ENCODE measurements at regions of chr2 and their contacts with region 1.

Region 1: DNA sequence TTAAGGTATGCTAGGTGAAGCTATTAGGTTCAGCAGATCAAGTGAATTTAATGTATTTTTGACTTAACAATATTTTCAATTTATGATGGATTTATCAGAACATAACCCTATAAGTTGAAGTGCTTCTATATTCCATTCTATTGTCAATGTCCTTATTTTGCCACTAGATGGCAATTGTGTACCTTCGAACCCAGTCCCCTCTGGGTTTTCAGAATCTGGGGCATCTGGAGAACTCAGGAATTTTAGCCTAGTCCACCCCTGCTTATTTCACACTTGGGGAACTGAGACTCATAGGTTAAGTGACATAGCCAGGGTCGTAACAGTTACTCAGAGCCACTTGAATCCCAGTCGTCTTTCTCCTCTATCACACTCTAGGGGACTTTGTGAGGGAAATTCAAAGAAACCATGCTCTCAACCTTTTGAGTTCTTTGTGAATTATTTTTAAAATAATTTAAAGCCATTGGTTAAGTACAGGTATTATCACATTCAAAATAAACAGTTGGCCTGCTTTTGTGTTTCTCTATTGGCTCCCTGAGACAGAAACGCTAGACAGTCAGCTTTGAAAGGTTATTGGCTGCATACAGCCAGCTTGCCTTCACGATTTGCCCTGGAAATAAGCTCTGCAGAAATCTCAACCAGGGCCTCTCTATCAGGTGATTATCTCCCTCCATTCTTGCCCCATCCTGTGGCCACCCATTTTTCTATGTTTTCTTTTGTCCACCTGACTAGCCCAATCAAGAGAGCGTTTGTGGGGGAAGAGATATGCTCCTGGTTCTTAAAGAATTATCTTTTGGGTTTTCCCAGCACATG is 145.0 kb downstream of the TTC27 start:
- DNase-seq: peak; percentile 42
- CTCF ChIP-seq: peak; percentile 13

Region 2: GRCh38 chr2:32951672-32952071 is 178.8 kb after region 1 on chr2:
- in situ Hi-C with region 1: no loop called
- DNase-seq: no peak
- CTCF ChIP-seq: no peak

Region 3: GRCh38 chr2:33372940-33373553 is 600.2 kb after region 1 on chr2:
- in situ Hi-C with region 1: loop called (anchors 10 kb)
- DNase-seq: peak; percentile 69
- CTCF ChIP-seq: peak; percentile 56

Region 4: DNA sequence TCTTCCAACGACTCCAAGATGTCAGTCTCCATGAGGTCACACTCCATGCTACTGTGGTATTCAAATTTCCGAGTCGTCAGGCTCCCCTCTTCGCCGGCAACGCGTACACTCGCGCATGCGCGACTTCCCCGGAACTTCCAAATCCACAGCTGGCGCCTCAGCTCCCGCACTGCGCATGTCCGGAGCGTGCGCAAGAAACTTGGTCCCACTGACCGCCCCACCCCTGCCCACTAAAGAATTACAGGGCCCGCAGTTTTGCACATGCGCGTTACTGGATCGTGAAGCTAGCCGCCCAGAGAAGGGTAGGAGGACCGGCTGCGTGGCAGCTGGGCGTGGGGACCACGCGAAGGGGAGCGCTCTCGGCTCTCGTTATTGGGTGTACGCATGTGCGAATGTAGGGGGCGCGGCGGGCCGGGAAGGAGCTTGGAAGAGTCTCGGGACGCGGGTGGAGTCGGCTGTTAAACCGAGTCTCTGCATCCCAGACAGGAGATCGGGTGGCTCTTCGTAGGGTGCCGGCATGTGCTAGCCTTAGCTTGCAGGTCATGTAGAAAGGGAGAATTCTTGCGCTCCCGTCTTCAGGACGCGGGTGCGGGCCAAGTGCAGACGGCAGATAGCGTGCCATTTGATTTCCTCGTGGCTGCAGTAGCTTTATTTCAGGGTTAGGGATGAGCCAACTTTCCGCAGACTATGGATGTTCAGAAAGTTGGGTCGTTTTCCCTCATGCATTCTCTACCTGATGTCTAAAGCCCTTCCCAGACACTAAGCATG is 826.5 kb after region 1 on chr2 and contains the start of gene FAM98A:
- in situ Hi-C with region 1: loop called (anchors 25 kb)
- DNase-seq: peak; percentile 97
- CTCF ChIP-seq: no peak